ENCODE measurements at regions of chr16 and their contacts with region 1.

Region 1: DNA sequence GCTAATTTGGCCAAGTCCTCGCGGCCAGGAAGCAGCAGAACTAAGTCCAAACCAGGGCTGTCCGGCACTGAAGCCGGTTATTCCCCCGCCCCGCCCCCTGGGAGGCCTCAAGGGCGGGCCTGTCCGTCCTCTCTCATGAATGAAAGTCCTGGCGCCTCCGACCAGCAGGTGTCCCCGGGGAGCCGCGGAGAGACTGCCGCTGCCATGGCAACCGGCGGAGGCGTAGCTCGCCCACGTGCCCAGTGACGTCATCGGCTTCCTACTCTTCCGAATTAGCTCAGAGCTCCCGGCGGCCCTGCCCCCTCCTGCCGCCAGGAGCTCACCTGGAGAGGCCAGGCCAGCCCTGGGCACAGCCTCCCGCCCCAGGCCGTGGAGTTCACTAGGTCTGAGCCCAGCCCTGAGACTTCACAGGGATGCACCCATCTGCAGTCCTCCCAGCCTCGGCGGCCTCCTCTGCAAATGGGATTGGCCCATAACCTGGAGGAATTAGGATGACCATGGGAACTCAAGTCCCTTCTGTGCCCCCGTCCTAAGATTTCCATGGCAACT is 1.3 kb downstream of the SPATA2L start:
- DNase-seq: peak; percentile 93
- ATAC-seq: peak; percentile 27
- H3K4me3 Mint-ChIP-seq: peak overlapping the region; percentile 83
- H3K27ac Mint-ChIP-seq: peak overlapping the region; percentile 74
- H3K4me1 Mint-ChIP-seq: peaks cover 27% of the 10 kb centered on the region
- H3K27me3 Mint-ChIP-seq: no peaks in the 10 kb centered on the region
- CTCF ChIP-seq: no peak

Region 2: GRCh38 chr16:88856828-88857733 is 843.1 kb before region 1 on chr16 and contains the starts of genes GALNS and TRAPPC2L:
- CTCF ChIA-PET with region 1: no interaction called
- POLR2A ChIA-PET with region 1: no interaction called
- intact Hi-C with region 1: loop called (anchors 1 kb)
- DNase-seq: peak; percentile 99
- ATAC-seq: peak; percentile 88
- H3K4me3 Mint-ChIP-seq: peak within 1 kb of the TSS; percentile 92
- H3K27ac Mint-ChIP-seq: peak within 1 kb of the TSS; percentile 86
- H3K4me1 Mint-ChIP-seq: peaks cover 39% of the 10 kb centered on the region
- H3K27me3 Mint-ChIP-seq: no peaks in the 10 kb centered on the region
- CTCF ChIP-seq: no peak
- total RNA-seq, gene GALNS: 39.9 and 48.3 TPM in 2 replicates
- total RNA-seq, gene TRAPPC2L: 38.7 and 54.8 TPM in 2 replicates

Region 3: DNA sequence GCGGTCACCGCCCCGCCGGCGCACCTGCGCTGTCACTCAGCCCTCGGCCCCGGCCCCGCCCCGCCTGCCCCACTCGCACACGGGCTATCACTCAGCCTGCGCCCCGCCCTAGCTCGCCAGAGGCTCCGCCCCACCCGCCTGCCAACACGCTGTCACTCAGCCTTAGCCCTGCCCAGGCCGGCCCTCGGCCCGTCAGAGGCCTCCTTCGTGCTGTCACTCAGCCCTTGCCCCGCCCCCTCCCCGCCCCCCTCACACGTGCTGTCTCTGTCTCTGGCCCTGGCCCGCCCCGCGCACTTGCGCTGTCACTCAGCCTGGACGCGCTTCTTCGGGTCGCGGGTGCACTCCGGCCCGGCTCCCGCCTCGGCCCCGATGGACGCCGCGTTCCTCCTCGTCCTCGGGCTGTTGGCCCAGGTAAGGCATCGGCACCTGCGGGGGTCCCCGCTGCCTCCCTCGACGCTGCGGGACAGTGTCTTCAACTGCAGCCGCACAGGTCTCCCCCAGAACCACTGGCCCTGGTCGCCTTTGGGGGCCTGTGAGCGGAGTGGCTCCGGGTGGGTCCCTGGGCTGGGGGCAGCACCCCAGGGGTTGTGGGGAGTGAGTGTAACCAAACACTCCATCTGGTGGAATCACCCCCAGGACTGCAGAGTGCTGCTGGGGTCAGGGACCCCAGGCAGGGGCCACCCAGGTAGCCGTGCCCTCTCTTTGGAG is 528.6 kb before region 1 on chr16 and contains the start of gene CDH15:
- CTCF ChIA-PET with region 1: no interaction called
- POLR2A ChIA-PET with region 1: no interaction called
- intact Hi-C with region 1: no loop called
- DNase-seq: peak; percentile 84
- ATAC-seq: peak; percentile 96
- H3K4me3 Mint-ChIP-seq: peak within 1 kb of the TSS; percentile 66
- H3K27ac Mint-ChIP-seq: no peak within 1 kb of the TSS
- H3K4me1 Mint-ChIP-seq: peaks cover 12% of the 10 kb centered on the region
- H3K27me3 Mint-ChIP-seq: peaks cover 2% of the 10 kb centered on the region
- CTCF ChIP-seq: no peak
- total RNA-seq, gene CDH15: not detected in 2 replicates

Region 4: GRCh38 chr16:89686520-89687091 is 13.6 kb before region 1 on chr16 and contains the start of gene CDK10:
- CTCF ChIA-PET with region 1: interaction called, 5 read pairs
- POLR2A ChIA-PET with region 1: interaction called, 38 read pairs
- intact Hi-C with region 1: loop called (anchors 1 kb)
- DNase-seq: peak; percentile 98
- ATAC-seq: peak; percentile 91
- H3K4me3 Mint-ChIP-seq: peak within 1 kb of the TSS; percentile 93
- H3K27ac Mint-ChIP-seq: peak within 1 kb of the TSS; percentile 90
- H3K4me1 Mint-ChIP-seq: peaks cover 18% of the 10 kb centered on the region
- H3K27me3 Mint-ChIP-seq: no peaks in the 10 kb centered on the region
- CTCF ChIP-seq: no peak
- total RNA-seq, gene CDK10: 67.9 and 76.1 TPM in 2 replicates

Region 5: DNA sequence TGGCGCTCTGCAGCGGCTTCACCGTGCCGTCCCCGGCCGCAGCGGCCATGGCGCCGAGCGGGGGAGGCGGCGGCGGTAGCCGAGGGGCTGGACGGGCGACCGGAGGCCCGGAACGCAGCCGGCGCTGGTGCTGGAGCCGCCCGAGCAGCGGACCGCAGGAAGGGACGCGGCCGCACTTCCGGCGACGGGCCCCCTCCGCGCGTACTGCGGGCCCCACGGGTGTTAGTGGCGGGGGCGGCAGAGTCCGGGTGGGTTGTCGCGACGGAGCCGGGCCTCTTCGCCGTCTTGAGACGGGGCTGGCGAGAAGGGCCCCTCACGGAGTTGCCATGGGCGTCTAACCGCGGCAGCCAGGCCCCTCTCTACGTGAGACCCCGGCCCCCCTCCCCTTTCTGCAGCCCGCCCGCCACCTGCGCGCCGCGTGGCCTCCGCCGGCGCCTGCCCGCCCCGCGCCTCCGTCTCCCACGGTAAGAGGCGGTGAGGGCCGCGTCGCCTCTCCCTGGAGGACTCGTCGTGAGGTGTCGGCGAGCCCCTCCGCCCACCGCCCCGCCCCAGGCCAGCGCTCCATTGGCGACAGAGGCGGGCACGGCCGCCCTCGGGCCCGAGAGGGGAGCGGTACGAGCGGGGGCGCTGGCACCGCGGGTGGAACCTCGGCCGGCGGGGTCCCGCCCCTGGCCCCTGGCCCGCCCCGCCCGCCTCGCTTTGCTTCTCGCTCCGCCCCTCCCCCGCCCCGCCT is 20.8 kb after region 1 on chr16 and contains the starts of genes VPS9D1 and ZNF276:
- CTCF ChIA-PET with region 1: no interaction called
- POLR2A ChIA-PET with region 1: interaction called, 8 read pairs
- intact Hi-C with region 1: loop called (anchors 1 kb)
- DNase-seq: peak; percentile 81
- ATAC-seq: peak; percentile 74
- H3K4me3 Mint-ChIP-seq: peak within 1 kb of the TSS; percentile 85
- H3K27ac Mint-ChIP-seq: peak within 1 kb of the TSS; percentile 85
- H3K4me1 Mint-ChIP-seq: peaks cover 35% of the 10 kb centered on the region
- H3K27me3 Mint-ChIP-seq: no peaks in the 10 kb centered on the region
- CTCF ChIP-seq: no peak
- total RNA-seq, gene VPS9D1: 6.6 and 7.4 TPM in 2 replicates
- total RNA-seq, gene ZNF276: 43.8 and 52.0 TPM in 2 replicates

Region 6: DNA sequence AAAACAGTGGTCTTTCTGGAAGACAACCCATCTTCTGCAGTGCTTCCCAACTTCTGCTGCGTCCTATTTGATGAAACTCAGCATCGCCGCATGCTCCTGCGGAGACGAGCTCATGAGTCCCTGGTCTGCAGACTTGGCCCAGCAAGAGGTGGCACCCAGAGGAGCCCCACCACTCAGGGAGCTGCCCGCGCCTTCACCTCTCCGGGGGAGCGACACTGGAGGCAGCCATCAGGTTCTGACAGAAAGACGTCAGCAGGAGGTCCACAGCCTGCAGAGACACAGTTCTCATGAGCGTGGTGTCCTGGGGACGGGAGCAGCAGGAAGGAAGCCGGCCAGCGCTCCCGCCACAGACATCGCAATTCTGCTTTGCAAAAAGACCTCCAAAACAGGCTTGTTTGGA is 70.2 kb after region 1 on chr16:
- CTCF ChIA-PET with region 1: interaction called, 3 read pairs
- POLR2A ChIA-PET with region 1: interaction called, 13 read pairs
- intact Hi-C with region 1: no loop called
- DNase-seq: no peak
- ATAC-seq: no peak
- H3K4me3 Mint-ChIP-seq: no peak overlapping the region
- H3K27ac Mint-ChIP-seq: no peak overlapping the region
- H3K4me1 Mint-ChIP-seq: peaks cover 17% of the 10 kb centered on the region
- H3K27me3 Mint-ChIP-seq: no peaks in the 10 kb centered on the region
- CTCF ChIP-seq: no peak

Region 7: DNA sequence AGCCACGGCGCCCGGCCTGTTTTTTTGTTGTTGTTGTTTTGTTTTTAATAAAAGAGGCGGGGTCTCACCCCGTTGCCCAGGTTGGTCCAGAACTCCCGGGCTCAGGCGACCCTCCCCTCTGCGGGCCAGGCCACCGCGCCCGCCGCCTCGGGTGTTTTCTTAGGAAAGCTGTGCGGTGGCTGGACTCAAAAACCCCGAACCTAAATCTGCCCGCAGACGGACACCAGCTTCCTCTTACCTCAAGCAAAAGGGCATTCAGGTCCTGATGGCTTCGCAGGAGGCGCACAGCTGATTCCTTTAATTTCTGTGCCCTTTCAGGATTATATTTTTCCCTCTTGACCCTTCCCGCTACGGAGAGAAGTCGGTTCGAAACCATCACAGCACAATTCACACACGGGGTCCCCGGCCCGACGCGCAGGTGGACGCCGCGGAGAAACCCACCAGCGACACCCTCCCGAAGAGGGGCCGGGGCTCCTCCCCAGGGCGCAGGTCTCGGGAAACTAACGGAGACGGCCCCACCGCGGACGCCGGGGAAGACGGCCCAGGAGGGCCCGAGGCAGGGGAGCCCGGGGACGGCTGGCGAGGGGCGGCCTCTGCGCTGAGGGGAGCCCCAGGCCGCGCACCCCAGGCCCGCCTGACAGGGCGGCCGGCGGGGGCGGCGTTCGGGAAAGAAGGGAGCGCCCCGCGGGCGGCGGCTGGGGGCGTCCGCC is 115.6 kb after region 1 on chr16:
- CTCF ChIA-PET with region 1: interaction called, 3 read pairs
- POLR2A ChIA-PET with region 1: interaction called, 3 read pairs
- intact Hi-C with region 1: loop called (anchors 1 kb)
- DNase-seq: no peak
- ATAC-seq: no peak
- H3K4me3 Mint-ChIP-seq: peak overlapping the region; percentile 87
- H3K27ac Mint-ChIP-seq: peak overlapping the region; percentile 66
- H3K4me1 Mint-ChIP-seq: peaks cover 19% of the 10 kb centered on the region
- H3K27me3 Mint-ChIP-seq: no peaks in the 10 kb centered on the region
- CTCF ChIP-seq: no peak